ENCODE measurements at regions of chr4 and their contacts with region 1.

Region 1: DNA sequence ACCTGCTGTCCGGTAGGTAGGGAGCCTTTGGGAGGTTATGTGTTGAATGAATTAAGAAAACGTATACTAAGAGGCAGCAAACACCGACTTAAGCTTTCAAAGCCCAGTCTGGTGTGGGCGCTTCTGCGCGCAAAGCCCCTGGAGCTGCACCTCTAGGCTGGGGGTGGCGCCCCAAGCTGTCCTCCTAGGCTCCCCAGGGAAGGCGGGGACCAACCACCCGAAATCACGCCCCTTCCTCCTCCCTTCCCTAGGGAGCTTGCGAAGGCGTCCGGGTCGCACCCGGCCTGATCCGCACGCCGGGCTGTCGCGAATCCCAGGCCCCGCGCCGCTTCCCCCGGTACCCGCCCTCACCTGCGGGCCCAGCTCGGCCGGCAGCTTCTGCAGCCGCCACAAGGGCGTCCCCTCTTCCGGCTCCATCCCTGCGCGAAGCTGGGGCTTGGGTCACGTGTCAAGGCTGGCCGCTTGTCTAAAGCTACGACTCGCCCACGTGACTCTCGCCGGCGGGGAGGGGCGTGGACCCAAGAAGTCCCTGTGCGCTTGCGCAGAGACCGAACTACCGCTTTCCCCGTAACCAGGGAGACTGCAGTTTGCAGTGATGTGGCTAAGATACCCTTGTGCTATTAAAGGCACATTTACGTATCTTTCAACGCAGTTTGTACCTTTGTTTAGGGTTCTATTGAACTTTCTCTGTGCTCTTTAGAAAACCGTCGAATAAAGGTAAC is at the start of gene COMMD8:
- DNase-seq: peak; percentile 98
- H3K4me3 Mint-ChIP-seq: peak within 1 kb of the TSS; percentile 85
- H3K27ac Mint-ChIP-seq: peak within 1 kb of the TSS; percentile 68
- H3K4me1 Mint-ChIP-seq: peaks cover 26% of the 10 kb centered on the region
- H3K27me3 Mint-ChIP-seq: no peaks in the 10 kb centered on the region
- total RNA-seq, gene COMMD8: 27.5 to 27.9 TPM

Region 2: DNA sequence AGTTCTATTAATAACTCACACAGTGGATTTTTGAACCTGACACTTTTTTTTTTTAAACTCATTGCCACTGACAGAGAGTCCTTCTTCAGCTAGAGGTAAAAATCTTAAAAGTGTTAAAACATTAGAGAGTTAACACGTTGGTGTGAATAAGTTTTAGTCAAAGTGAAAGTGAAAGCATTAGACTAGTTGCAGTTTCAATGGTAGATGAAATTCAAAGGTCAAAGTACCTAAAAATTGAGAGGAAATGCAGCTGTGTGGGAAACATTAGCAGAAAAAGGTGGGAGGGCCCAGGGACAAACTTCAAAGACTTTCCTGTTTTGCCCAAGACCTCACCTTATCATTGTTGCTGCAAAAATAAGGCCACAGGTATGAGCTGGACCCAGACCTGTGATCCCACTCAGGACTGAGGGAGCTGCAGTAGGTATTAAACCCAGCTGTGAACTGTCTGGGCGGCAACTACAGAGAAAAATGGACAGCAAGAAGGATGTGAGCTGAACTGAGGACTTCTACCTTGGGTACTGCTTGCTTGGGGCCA is 452.4 kb before region 1 on chr4:
- CTCF ChIA-PET with region 1: no interaction called
- POLR2A ChIA-PET with region 1: no interaction called
- intact Hi-C with region 1: loop called (anchors 10 kb)
- DNase-seq: no peak
- H3K4me3 Mint-ChIP-seq: no peak overlapping the region
- H3K27ac Mint-ChIP-seq: no peak overlapping the region
- H3K4me1 Mint-ChIP-seq: peaks cover 13% of the 10 kb centered on the region
- H3K27me3 Mint-ChIP-seq: no peaks in the 10 kb centered on the region

Region 3: DNA sequence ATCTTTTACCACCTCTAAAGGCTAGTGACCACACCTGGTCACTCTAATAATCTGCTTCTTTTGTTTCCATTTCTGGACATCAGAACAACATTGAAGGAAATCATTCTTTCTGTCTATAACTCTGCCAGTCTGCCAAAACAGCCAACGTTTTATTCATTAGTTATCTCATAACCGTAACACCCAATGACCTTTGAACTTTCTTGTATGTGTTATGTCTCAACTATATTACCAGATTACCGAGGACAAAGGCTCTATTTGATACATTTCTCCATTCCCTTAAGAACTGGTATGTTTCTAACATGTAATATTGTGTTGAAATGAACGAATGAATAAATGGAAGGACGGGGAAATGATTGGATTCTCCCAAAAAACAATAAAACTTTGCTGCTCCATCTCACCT is 279.3 kb before region 1 on chr4:
- CTCF ChIA-PET with region 1: no interaction called
- POLR2A ChIA-PET with region 1: no interaction called
- intact Hi-C with region 1: no loop called
- DNase-seq: no peak
- H3K4me3 Mint-ChIP-seq: no peak overlapping the region
- H3K27ac Mint-ChIP-seq: no peak overlapping the region
- H3K4me1 Mint-ChIP-seq: no peaks in the 10 kb centered on the region
- H3K27me3 Mint-ChIP-seq: peaks cover 14% of the 10 kb centered on the region

Region 4: GRCh38 chr4:47374477-47374876 is 88.9 kb before region 1 on chr4:
- CTCF ChIA-PET with region 1: no interaction called
- POLR2A ChIA-PET with region 1: no interaction called
- intact Hi-C with region 1: no loop called
- DNase-seq: no peak
- H3K4me3 Mint-ChIP-seq: no peak overlapping the region
- H3K27ac Mint-ChIP-seq: no peak overlapping the region
- H3K4me1 Mint-ChIP-seq: no peaks in the 10 kb centered on the region
- H3K27me3 Mint-ChIP-seq: peaks cover 10% of the 10 kb centered on the region

Region 5: GRCh38 chr4:47485047-47485692 is 21.8 kb after region 1 on chr4 and contains the start of gene ATP10D:
- CTCF ChIA-PET with region 1: interaction called, 14 read pairs
- POLR2A ChIA-PET with region 1: interaction called, 4 read pairs
- intact Hi-C with region 1: loop called (anchors 1 kb)
- DNase-seq: peak; percentile 86
- H3K4me3 Mint-ChIP-seq: peak within 1 kb of the TSS; percentile 90
- H3K27ac Mint-ChIP-seq: peak within 1 kb of the TSS; percentile 76
- H3K4me1 Mint-ChIP-seq: peaks cover 20% of the 10 kb centered on the region
- H3K27me3 Mint-ChIP-seq: no peaks in the 10 kb centered on the region
- total RNA-seq, gene ATP10D: 2.8 to 3.0 TPM

Region 6: GRCh38 chr4:47490550-47490949 is 27.2 kb after region 1 on chr4:
- CTCF ChIA-PET with region 1: interaction called, 14 read pairs
- POLR2A ChIA-PET with region 1: no interaction called
- intact Hi-C with region 1: loop called (anchors 1 kb)
- DNase-seq: no peak
- H3K4me3 Mint-ChIP-seq: no peak overlapping the region
- H3K27ac Mint-ChIP-seq: no peak overlapping the region
- H3K4me1 Mint-ChIP-seq: peaks cover 17% of the 10 kb centered on the region
- H3K27me3 Mint-ChIP-seq: no peaks in the 10 kb centered on the region

Region 7: DNA sequence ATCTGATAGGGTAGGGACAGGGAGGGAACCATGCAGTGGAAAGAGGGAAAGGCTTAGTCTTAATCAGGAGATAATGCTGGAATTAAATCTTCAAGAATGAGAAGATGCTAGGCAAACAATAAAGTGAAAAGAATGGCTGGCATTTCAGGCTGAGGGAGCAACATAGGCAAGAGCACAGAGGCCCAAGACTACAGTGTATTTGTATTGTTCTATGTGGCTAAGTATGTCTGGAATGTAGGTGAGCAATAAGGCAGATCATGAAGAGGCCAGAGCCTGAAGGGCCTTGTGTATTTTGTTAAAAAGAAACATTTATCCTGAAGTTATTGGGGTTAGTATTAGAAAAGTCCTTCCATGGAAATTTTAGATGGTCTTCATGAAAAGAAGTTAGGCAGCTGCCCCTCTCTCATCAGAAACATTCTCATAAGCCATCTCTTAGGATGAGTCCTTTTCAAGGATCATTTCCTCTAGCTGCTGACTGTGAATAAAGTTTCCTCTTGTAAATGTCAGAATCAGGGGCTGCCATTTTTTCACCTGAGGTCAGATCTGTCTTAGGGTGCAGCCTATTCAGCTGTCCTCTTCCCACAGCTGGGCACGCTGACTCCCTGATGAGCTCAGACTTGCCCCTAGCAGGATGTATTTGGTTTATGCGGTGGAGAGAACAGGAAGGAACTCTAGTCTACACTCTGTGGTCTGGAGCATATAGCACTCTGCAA is 68.0 kb after region 1 on chr4:
- CTCF ChIA-PET with region 1: no interaction called
- POLR2A ChIA-PET with region 1: no interaction called
- intact Hi-C with region 1: loop called (anchors 2 kb)
- DNase-seq: peak; percentile 66
- H3K4me3 Mint-ChIP-seq: no peak overlapping the region
- H3K27ac Mint-ChIP-seq: peak overlapping the region; percentile 1
- H3K4me1 Mint-ChIP-seq: peaks cover 33% of the 10 kb centered on the region
- H3K27me3 Mint-ChIP-seq: no peaks in the 10 kb centered on the region